Activated CD4-positive, alpha-beta T cell treated with anti-CD3 and anti-CD28 coated beads, Interleukin-2, amount 10 ng/mL, durations not matched to agents 24 days and 14 days (primary cell): ENCODE measurements at regions of chr18 and their contacts with region 1.

Region 1: DNA sequence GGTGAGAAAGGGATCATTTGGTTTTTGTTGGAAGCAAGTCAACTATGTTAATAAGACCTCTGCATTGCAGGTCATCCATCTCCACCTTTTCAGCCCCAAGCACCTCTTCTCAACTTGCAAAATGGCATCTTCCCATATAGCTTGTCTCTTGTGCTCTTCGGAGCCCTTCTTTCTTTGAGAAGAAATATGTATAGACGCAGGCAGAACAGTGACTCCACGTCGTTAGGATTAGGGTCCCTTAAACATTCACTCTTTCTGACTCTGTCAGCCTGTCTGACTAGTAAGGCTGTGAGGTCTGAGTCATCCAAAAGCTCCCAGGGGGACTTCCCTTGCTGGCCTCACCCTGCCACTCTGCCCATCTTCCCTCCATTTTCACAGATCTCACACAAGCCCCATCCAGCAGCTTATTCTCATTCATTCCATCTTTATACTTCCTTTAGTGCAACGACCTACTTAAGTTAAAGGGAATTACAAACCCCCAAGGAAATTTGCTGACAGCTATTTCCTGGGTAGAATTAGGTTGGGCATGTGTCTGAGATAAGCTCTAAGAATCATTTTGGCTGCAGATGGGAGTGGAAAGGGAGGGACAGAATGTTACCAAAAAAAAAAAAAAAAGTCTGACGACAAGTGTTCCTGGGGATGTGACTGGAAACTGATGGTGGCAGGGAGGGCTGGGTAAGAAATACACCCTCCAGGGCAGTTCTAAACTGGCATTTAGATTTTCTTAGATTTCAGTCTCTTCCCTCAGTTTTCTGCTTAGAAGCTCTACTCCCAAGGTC is 37.7 kb upstream of the MEX3C start:
- DNase-seq: peak; percentile 65
- H3K4me3 Mint-ChIP-seq: peak overlapping the region; percentile 10
- H3K27ac Mint-ChIP-seq: peak overlapping the region; percentile 34
- H3K4me1 Mint-ChIP-seq: peaks cover 19% of the 10 kb centered on the region
- H3K27me3 Mint-ChIP-seq: no peaks in the 10 kb centered on the region

Region 2: DNA sequence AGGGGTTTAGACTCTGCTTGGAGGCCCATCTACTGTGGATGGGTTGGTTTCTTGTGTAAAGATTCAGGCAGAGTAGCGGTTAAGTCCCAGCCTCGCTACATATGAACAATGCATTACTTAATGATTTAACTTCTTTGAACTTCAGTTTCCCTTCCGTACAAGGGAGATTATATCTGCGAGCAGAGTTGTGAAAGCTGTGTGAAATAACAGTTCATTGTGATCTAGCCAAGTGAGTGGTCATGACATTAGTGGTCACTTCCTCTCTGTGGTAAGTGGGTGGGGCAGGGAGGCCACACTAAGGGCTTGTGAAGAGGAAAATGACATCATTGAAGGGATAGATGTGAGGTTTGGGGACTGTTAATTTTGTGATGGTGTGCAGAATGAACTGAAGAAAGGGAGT is 23.6 kb before region 1 on chr18:
- intact Hi-C with region 1: loop called (anchors 1 kb)
- DNase-seq: peak; percentile 87
- H3K4me3 Mint-ChIP-seq: no peak overlapping the region
- H3K27ac Mint-ChIP-seq: peak overlapping the region; percentile 44
- H3K4me1 Mint-ChIP-seq: peaks cover 19% of the 10 kb centered on the region
- H3K27me3 Mint-ChIP-seq: no peaks in the 10 kb centered on the region

Region 3: DNA sequence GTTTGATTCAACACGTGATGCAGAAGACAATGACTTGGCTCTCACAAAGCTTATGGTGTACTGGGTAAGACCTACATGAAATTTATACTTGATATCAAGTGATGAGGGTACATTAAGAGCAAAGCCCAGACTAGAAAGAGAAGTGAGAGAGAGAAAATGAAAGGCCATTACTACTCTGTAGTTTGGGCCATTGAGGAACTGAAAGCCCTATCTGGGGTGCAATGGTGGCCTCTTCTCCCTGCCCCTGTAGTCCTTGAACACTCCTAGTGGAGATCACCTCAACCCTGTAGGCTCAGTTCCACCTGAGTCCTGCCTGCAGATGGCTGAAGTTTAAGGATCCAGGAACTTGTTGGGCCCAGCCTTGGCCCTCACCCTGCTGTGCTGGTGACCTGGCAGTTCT is 532.1 kb after region 1 on chr18:
- intact Hi-C with region 1: no loop called
- DNase-seq: no peak
- H3K4me3 Mint-ChIP-seq: no peak overlapping the region
- H3K27ac Mint-ChIP-seq: no peak overlapping the region
- H3K4me1 Mint-ChIP-seq: no peaks in the 10 kb centered on the region
- H3K27me3 Mint-ChIP-seq: no peaks in the 10 kb centered on the region